Heart left ventricle (tissue), 16 donors: ENCODE measurements at regions of chr17 and their contacts with region 1.

Region 1: GRCh38 chr17:17496189-17497064 is at the start of gene RASD1:
- DNase-seq: peak; percentile 92 to 97 (median 94)
- ATAC-seq: peak; percentile 72 to 92 (median 90)
- H3K4me3 ChIP-seq: peak within 1 kb of the TSS; percentile 49 to 81 (median 68)
- H3K27ac ChIP-seq: peak within 1 kb of the TSS; percentile 78 to 98 (median 91)
- H3K4me1 ChIP-seq: peaks cover 0 to 51% (median 23%) of the 10 kb centered on the region in 12 donors
- H3K27me3 ChIP-seq: peaks cover 0 to 7% (median 0%) of the 10 kb centered on the region in 9 donors
- CTCF ChIP-seq: peak; percentile 91 to 99 (median 98)
- POLR2A ChIP-seq: peak; percentile 98 to 100
- total RNA-seq, gene RASD1: 1.5 to 43.5 (median 16.2) TPM

Region 2: GRCh38 chr17:17416007-17416399 is 80.4 kb before region 1 on chr17:
- intact Hi-C with region 1: loop called in 3 of 10 experiments (anchors 1 to 5 kb)
- DNase-seq: no peak
- ATAC-seq: peak in 2 of 4 donors; percentile 16 to 41
- H3K4me3 ChIP-seq: no peak overlapping the region
- H3K27ac ChIP-seq: peak overlapping the region; percentile 19 to 82 (median 74)
- H3K4me1 ChIP-seq: peaks cover 0 to 63% (median 33%) of the 10 kb centered on the region in 12 donors
- H3K27me3 ChIP-seq: no peaks in the 10 kb centered on the region
- CTCF ChIP-seq: no peak
- POLR2A ChIP-seq: no peak

Region 3: DNA sequence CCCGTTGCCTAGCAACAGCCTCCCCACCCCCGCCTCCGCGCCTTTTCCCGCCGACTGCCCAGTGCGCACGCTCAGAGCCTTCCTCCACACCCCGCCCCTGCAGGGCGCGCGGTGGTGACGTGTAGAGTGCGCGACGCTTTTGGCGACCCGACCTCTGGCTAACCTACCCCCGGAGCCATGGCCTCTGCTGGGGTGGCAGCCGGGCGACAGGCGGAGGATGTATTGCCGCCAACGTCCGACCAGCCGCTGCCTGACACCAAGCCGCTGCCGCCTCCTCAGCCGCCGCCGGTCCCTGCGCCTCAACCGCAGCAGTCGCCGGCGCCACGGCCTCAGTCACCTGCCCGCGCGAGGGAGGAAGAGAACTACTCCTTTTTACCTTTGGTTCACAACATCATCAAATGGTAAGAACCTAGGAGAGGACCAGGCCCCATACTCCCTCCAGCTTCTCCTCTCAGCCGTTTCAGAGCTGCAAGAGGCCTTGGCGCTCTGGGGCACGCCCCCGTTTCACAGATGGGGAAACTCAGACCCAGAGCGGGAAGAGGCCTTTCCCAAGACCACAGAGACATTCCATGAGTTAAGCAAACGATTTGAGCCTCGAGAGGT is 19.5 kb before region 1 on chr17 and contains the start of gene MED9:
- intact Hi-C with region 1: loop called in 1 of 10 experiments (anchors 2 kb)
- DNase-seq: peak; percentile 93 to 97 (median 95)
- ATAC-seq: peak; percentile 95 to 99 (median 99)
- H3K4me3 ChIP-seq: peak within 1 kb of the TSS; percentile 63 to 98 (median 84)
- H3K27ac ChIP-seq: peak within 1 kb of the TSS; percentile 90 to 98 (median 94)
- H3K4me1 ChIP-seq: peaks cover 0 to 52% (median 41%) of the 10 kb centered on the region in 12 donors
- H3K27me3 ChIP-seq: no peaks in the 10 kb centered on the region
- CTCF ChIP-seq: no peak
- POLR2A ChIP-seq: peak; percentile 29 to 77
- total RNA-seq, gene MED9: 26.3 to 64.4 (median 33.0) TPM

Region 4: DNA sequence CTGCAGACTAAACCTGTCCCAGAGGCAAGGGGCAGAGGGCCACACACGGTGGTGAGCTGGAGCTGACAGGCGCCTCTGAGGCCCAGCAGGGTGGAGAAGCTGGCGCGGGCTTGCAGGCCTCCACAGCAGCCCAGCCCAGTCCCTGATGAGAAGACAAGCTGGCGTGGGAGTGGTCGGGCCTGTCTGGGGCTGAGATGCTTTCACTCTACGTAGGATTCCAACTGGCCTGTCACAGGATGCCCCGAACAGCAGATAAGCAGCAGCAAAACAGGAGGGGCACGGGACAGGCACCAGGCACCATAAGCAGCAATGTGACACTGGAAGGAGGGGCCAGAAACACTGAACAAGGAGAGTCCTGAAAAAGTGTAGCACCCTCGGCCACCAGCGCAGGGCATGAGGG is 54.9 kb after region 1 on chr17:
- intact Hi-C with region 1: loop called in 1 of 10 experiments (anchors 5 kb)
- DNase-seq: peak; percentile 69 to 88 (median 82)
- ATAC-seq: peak; percentile 79 to 90 (median 84)
- H3K4me3 ChIP-seq: no peak overlapping the region
- H3K27ac ChIP-seq: peak overlapping the region; percentile 59 to 90 (median 81)
- H3K4me1 ChIP-seq: peaks cover 0 to 69% (median 31%) of the 10 kb centered on the region in 12 donors
- H3K27me3 ChIP-seq: no peaks in the 10 kb centered on the region
- CTCF ChIP-seq: no peak
- POLR2A ChIP-seq: peak in 1 of 2 donors; percentile 29

Region 5: DNA sequence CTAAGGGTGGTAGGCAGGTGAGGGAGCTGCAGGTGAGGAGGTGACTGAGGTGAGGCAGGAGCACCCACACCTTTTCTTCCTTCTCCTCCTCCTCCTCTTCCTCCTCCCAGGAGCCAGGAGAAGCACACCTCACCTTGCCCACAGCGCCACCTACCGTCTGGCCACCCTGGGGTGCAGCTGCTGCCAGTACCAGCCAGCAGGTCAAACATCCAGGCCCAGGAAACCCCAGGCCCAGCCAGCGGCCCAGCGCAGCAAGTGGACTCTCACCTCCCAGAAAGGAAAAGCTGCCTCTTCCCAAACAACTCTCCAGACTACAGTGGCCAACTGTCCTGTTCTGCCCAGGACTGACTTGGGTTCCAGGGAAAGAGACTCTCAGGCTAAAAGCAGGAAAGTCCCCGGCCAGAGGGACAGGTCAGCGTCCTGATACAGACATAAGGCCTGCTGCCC is 72.3 kb after region 1 on chr17:
- intact Hi-C with region 1: loop called (anchors 1 to 5 kb)
- DNase-seq: peak; percentile 70 to 88 (median 83)
- ATAC-seq: peak in 2 of 4 donors; percentile 48 to 57
- H3K4me3 ChIP-seq: no peak overlapping the region
- H3K27ac ChIP-seq: peak overlapping the region in 8 of 12 donors; percentile 29 to 99 (median 88)
- H3K4me1 ChIP-seq: peaks cover 3 to 72% (median 51%) of the 10 kb centered on the region in 12 donors
- H3K27me3 ChIP-seq: no peaks in the 10 kb centered on the region
- CTCF ChIP-seq: peak; percentile 50 to 78 (median 65)
- POLR2A ChIP-seq: no peak

Region 6: GRCh38 chr17:17641621-17642409 is 145.4 kb after region 1 on chr17:
- intact Hi-C with region 1: loop called in 8 of 10 experiments (anchors 1 to 10 kb)
- DNase-seq: peak; percentile 70 to 85 (median 76)
- ATAC-seq: peak; percentile 69 to 91 (median 90)
- H3K4me3 ChIP-seq: no peak overlapping the region
- H3K27ac ChIP-seq: peak overlapping the region in 1 of 12 donors; percentile 23
- H3K4me1 ChIP-seq: peaks cover 0 to 13% (median 0%) of the 10 kb centered on the region in 12 donors
- H3K27me3 ChIP-seq: no peaks in the 10 kb centered on the region
- CTCF ChIP-seq: peak; percentile 80 to 94 (median 88)
- POLR2A ChIP-seq: no peak